Transverse colon (tissue), 4 donors: ENCODE measurements at regions of chr16 and their contacts with region 1.

Region 1: DNA sequence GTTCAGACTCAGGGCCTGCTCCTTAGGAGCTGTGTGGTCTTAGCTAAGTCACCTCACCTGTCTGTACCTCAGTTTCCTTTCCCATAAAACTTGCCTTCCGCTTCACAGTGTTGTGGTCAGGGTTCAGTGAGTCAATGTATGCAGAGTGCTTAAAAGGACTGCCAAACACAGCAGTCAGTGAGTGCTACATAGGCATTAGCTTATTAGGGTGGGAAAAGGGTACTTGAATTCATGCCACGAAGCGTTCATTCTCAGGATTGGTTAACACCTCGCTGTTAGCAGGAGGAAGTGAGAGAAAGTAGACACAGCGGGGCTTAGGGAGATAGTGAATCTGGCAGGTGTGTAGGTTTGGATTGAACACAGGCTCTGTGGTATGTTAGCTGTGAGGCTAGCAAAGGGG is 155.2 kb downstream of the SHISA9 start:
- DNase-seq: no peak
- H3K4me3 ChIP-seq: no peak overlapping the region
- H3K27ac ChIP-seq: no peak overlapping the region
- H3K4me1 ChIP-seq: no peaks in the 10 kb centered on the region
- H3K27me3 ChIP-seq: no peaks in the 10 kb centered on the region
- CTCF ChIP-seq: no peak
- EP300 ChIP-seq: no peak
- POLR2A ChIP-seq: no peak

Region 2: DNA sequence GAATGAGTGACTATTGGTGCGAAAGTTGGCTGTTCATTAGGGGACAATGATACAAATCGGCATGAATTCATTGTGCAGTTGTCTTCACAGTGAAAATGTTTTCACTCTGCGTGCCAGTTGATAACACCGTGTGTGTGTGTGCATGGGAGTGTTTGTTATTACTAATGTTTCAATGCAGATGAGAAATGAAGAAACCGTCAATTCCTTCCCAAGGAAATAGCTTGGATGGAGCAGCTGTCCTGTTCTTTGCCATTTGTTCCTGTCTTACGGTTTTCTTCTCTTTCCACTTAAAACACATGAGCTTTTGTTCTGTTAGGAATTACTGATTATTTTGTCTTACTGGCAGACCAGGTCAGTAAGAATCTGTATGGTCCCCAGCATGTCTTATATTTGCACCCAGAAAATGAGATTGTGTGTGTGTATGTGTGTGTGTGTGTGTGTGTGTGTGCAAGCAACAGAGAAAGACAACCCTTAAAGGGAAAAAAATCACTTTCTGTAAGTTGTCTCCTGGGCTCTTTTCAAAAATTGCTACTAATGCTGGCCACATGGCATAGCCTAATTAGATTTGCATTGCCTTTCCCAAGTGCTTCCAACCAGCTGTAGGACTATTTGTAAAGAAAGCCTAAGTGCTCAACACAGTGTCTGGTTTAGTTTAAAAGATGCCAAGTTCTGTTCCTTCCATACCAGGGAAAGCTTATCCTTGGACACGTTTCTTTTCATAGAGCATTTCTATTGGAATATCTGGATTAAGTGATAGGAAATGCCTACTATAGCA is 131.4 kb before region 1 on chr16:
- in situ Hi-C with region 1: no loop called
- intact Hi-C with region 1: no loop called
- DNase-seq: no peak
- H3K4me3 ChIP-seq: no peak overlapping the region
- H3K27ac ChIP-seq: no peak overlapping the region
- H3K4me1 ChIP-seq: no peaks in the 10 kb centered on the region
- H3K27me3 ChIP-seq: no peaks in the 10 kb centered on the region
- CTCF ChIP-seq: no peak
- EP300 ChIP-seq: no peak
- POLR2A ChIP-seq: no peak

Region 3: GRCh38 chr16:13254998-13255614 is 198.5 kb after region 1 on chr16:
- in situ Hi-C with region 1: no loop called
- intact Hi-C with region 1: loop called (anchors 5 kb)
- DNase-seq: no peak
- H3K4me3 ChIP-seq: no peak overlapping the region
- H3K27ac ChIP-seq: no peak overlapping the region
- H3K4me1 ChIP-seq: no peaks in the 10 kb centered on the region
- H3K27me3 ChIP-seq: no peaks in the 10 kb centered on the region
- CTCF ChIP-seq: no peak
- EP300 ChIP-seq: no peak
- POLR2A ChIP-seq: no peak